Sciatic nerve (tissue), 2 donors: ENCODE measurements at regions of chr19 and their contacts with region 1.

Region 1: GRCh38 chr19:33406521-33407139 is 33.1 kb downstream of the CEBPG start:
- DNase-seq: peak; percentile 90
- ATAC-seq: peak; percentile 79

Region 2: GRCh38 chr19:33235269-33235995 is 171.2 kb before region 1 on chr19:
- intact Hi-C with region 1: loop called (anchors 5 kb)
- DNase-seq: peak; percentile 92
- ATAC-seq: peak; percentile 69

Region 3: GRCh38 chr19:33302175-33302973 is 104.3 kb before region 1 on chr19 and contains the start of gene CEBPA:
- intact Hi-C with region 1: loop called (anchors 10 kb)
- DNase-seq: peak; percentile 89
- ATAC-seq: peak; percentile 84
- total RNA-seq, gene CEBPA: 20.4 TPM

Region 4: GRCh38 chr19:33392341-33393285 is 14.0 kb before region 1 on chr19:
- intact Hi-C with region 1: loop called (anchors 2 kb)
- DNase-seq: peak; percentile 62
- ATAC-seq: no peak

Region 5: DNA sequence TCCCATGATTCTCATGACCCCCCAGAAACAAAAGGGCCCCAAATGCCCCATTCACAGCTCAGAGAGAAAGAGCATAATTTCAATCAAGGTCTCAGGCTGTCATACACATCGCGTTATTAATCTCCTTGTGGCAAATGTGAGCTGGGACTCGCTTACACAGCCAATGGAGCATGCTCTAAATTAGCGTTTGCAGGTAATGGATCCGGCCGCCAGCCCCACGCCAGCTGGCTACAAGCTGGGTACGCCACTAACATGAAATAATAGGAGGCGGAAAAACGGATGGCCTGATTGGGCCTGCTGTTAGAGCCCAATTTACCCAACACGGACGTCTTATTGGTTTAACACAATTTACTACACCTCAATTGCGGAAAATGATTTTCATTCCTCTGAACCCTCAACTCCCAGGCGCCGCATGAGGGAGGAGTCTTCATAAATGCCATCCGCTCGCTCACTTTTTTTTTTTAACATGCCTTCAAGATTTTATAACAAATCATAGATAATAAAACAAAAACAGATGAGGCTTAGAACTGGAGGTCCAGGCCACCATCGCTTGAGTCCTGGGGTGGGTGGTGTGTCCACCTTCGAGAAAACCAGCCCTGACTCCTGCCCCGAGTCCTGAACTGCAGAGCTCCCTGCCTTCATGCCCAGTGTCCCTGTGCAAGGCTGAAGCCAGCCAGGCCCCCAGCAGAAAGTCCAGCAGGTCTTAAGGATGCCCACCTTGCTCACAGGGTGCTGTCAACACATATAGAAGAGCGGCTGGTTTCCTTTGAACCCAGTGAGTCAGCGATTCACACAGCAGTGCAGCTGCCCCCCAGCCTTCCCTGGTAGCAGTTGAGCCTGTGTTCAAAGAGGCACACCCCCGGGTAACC is 52.8 kb after region 1 on chr19:
- intact Hi-C with region 1: no loop called
- DNase-seq: peak; percentile 39
- ATAC-seq: no peak